ENCODE measurements at regions of chr7 and their contacts with region 1.

Region 1: DNA sequence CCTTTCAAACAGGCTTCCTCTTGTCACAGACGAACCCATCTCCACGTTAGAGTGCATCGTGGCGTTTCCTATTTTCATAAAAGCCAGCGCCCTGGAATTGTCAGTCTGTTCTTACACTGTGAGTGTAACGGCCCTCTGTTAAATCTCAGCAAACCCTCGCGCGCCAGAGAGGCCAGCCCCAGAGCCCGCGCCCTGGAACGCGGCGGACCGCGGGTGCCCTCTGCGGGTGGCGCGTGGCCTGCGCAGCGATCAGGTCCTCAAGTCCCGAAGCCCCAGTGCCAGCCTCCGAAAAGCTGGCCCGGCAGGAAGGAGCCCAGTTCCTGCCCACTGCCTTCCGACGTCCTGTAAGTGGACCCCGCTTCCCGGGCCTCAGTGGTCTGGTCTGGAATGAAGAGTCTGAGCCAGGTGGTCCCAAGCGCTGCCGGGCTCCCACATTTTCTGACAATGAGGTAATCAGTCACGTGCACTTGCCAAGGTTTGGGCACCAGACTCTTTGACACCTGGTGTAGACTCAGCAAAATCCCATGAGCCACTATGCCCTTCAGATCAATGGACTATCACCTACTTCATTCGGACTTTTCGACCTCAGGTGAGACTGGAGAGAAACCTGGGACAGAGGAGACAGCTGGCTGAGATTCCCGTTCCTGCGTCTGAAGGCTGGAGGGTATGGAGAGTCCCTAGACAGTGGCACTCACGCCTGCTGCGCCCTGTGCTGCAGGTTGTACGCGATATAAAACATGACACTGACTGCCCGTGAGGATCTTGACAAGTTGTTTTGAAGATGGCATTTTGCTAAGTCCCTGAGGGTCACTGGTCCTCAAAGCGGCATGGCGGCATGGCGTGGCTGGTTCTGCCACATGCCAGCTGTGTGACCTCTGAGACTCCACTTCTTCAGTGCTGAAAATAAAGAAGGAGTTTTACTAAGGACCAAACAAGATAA is 109.4 kb upstream of the LANCL2 start:
- DNase-seq: peak; percentile 87
- ATAC-seq: peak; percentile 94
- H3K4me3 Mint-ChIP-seq: peak overlapping the region; percentile 75
- H3K27ac Mint-ChIP-seq: peak overlapping the region; percentile 49
- H3K4me1 Mint-ChIP-seq: peaks cover 6% of the 10 kb centered on the region
- H3K27me3 Mint-ChIP-seq: peaks cover 50% of the 10 kb centered on the region

Region 2: DNA sequence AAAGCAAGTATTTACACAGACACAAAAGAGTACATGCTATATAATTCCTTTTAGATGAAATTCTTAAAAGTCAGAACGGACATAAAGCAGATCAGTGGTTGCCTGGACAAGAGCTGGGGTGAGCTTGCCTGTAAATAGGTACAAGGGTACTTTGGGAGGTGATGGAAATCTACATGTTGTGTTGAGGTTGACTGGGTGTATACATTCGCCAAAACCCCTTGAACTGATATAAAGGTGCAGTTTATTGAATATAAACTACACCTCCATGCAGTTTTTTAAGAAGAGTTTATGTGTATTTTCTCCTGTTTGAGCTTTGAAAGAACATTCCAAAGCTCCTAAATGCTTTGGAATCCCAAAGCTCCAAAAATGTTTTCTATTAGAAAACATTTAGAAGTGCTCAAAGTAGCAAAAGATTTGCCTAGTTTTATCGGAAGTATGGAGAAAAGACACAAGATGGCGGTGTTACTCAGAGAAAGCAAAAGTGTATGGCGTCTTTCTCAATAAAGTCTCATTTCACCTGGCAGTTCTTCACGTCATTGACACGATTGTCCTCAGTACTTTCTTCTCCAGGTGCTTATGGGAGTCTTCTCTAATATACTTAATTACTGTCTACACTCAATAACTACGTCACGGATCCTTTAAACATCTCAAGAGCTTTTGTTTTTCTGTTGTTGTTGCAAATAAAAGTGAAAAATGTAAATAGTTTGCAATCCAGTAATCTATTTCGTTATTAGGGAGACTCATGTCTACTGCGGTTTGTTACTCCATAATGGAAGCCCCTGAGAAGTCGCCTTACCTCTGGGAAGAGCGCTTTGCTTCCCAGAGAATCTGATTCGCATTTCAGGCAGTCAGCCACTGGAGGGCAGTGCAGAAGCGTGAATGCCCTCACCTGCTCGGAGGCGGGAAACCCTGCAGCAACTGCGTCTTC is 482.0 kb before region 1 on chr7:
- CTCF ChIA-PET with region 1: interaction called, 68 read pairs
- POLR2A ChIA-PET with region 1: no interaction called
- intact Hi-C with region 1: loop called (anchors 1 kb)
- DNase-seq: peak; percentile 87
- ATAC-seq: peak; percentile 91
- H3K4me3 Mint-ChIP-seq: peak overlapping the region; percentile 62
- H3K27ac Mint-ChIP-seq: peak overlapping the region; percentile 71
- H3K4me1 Mint-ChIP-seq: peaks cover 6% of the 10 kb centered on the region
- H3K27me3 Mint-ChIP-seq: peaks cover 19% of the 10 kb centered on the region

Region 3: GRCh38 chr7:54967384-54967783 is 288.4 kb before region 1 on chr7:
- CTCF ChIA-PET with region 1: no interaction called
- POLR2A ChIA-PET with region 1: no interaction called
- intact Hi-C with region 1: no loop called
- DNase-seq: no peak
- ATAC-seq: no peak
- H3K4me3 Mint-ChIP-seq: no peak overlapping the region
- H3K27ac Mint-ChIP-seq: no peak overlapping the region
- H3K4me1 Mint-ChIP-seq: no peaks in the 10 kb centered on the region
- H3K27me3 Mint-ChIP-seq: peaks cover 13% of the 10 kb centered on the region

Region 4: DNA sequence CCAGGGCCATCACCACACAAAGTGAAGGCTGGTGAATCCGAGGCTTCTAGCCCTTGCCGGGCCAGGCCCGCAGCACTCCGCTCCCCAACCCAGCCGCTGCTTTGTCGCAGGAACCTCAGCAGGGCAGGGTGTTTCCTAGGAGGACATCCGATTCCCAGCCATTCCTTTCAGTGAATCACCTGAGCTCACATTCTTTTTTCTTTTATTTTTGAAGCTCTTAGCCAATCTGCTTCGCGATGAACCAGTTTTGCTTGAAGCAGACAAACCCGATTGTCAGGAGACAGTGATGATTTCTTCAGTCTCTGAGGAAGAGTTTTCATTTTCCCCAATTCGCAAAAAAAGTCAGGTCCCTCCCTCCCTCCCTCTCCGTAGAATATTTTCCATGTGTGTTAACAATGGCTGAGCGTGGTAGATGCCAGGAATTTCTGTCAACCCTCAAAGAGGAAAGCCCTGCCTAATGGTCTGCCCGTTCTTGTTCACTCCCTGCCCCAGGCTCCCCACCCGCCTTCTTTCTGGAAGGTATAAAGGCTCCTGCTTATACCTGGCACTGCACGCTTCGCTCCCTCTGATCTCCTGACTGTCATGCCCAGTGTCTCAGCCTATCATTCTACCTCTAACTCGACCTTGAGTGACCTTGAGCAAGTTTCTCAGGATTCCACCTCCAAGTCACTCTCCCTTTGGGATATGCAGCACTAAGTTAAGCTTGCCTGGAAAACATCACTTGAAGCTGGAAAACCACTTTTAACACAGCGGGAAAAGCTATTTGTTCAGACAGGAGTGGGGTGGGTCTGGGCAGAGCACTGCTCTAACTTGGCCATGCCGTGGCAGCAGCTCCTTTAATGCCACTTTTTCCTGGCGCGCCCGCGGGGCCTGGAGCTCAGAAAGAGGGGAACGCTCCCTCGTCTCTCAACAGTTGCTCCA is 201.9 kb before region 1 on chr7:
- CTCF ChIA-PET with region 1: no interaction called
- POLR2A ChIA-PET with region 1: no interaction called
- intact Hi-C with region 1: loop called in 1 of 2 experiments (anchors 10 kb)
- DNase-seq: no peak
- ATAC-seq: no peak
- H3K4me3 Mint-ChIP-seq: no peak overlapping the region
- H3K27ac Mint-ChIP-seq: no peak overlapping the region
- H3K4me1 Mint-ChIP-seq: no peaks in the 10 kb centered on the region
- H3K27me3 Mint-ChIP-seq: peaks cover 12% of the 10 kb centered on the region

Region 5: GRCh38 chr7:55140221-55140940 is 115.4 kb before region 1 on chr7:
- CTCF ChIA-PET with region 1: interaction called, 3 read pairs
- POLR2A ChIA-PET with region 1: no interaction called
- intact Hi-C with region 1: loop called (anchors 5 to 10 kb)
- DNase-seq: no peak
- ATAC-seq: peak; percentile 65
- H3K4me3 Mint-ChIP-seq: no peak overlapping the region
- H3K27ac Mint-ChIP-seq: no peak overlapping the region
- H3K4me1 Mint-ChIP-seq: peaks cover 9% of the 10 kb centered on the region
- H3K27me3 Mint-ChIP-seq: peaks cover 29% of the 10 kb centered on the region

Region 6: GRCh38 chr7:55265836-55266642 is 10.3 kb after region 1 on chr7:
- CTCF ChIA-PET with region 1: interaction called, 21 read pairs
- POLR2A ChIA-PET with region 1: interaction called, 4 read pairs
- intact Hi-C with region 1: no loop called
- DNase-seq: no peak
- ATAC-seq: no peak
- H3K4me3 Mint-ChIP-seq: no peak overlapping the region
- H3K27ac Mint-ChIP-seq: no peak overlapping the region
- H3K4me1 Mint-ChIP-seq: no peaks in the 10 kb centered on the region
- H3K27me3 Mint-ChIP-seq: no peaks in the 10 kb centered on the region

Region 7: DNA sequence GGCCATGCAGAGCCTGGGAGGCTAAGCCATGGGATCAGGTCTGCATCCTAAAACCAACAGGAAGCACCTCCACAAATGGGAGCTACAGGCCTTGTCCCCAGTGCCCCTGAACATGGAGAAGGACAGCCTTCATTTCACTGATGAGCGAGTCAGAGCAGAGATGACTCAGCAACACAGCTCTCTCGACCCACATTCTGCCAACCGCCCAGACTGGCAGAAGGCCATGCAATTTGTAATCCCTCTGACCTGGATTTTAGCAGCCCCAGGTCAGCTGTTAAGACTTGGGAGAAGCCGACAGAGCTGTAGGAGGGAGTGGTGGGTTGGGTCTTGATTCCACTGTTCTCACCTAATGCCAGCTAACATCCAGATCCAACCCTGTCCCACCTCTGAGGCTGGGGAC is 291.1 kb after region 1 on chr7:
- CTCF ChIA-PET with region 1: no interaction called
- POLR2A ChIA-PET with region 1: no interaction called
- intact Hi-C with region 1: no loop called
- DNase-seq: peak; percentile 77
- ATAC-seq: peak; percentile 95
- H3K4me3 Mint-ChIP-seq: no peak overlapping the region
- H3K27ac Mint-ChIP-seq: no peak overlapping the region
- H3K4me1 Mint-ChIP-seq: peaks cover 79% of the 10 kb centered on the region
- H3K27me3 Mint-ChIP-seq: no peaks in the 10 kb centered on the region